ENCODE measurements at regions of chr17 and their contacts with region 1.

Region 1: DNA sequence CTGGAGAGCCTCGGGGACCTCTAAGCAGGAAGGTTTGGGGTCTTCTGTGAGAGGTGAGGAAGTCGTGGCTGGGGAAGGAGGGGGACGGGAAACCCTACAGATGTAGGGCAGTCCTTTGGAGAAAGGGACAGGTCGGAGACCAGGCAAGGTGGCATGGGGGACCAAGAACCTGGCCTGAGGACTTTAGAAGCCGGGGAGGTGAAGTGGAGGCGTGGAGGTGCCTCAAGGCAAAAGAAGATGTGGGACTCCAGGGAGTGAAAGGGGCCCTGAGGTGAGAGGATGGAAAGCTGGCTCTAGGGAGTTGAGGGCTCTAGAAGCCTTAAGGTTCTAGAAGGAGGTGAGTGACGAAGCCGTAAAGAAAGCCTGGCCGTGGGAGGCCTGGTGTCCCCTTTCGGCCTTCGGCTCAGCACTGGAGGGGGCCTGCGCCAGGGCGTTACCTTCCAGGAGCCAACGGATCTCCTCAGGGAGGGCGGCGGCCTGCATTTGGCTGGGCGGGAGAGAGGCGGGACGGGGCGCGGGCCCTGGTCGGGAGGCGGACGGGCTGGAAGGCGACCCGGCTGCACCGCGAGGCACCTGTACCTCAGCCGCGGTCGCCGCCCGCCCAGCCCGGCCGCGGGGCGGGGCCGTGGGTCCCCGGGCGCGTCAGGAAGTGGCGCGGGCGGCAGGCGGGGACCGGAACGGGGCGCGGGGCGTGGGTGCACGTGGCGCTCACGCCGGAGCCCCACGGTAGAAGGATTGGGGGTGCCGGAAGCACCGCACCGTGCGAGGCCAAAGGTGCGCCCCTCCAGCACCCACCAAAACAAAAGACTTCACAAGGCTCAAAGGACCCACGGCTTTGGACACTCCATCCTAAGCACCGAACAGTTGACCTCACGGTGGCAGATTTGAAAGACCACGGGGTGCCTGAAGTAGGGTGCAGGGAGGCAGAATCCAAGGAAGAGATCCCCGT is at the start of gene SKAP1:
- DNase-seq: no peak
- ATAC-seq: peak; percentile 84
- H3K4me3 ChIP-seq: peak within 1 kb of the TSS; percentile 94
- H3K27ac ChIP-seq: peak within 1 kb of the TSS; percentile 74
- H3K4me1 ChIP-seq: peaks cover 8% of the 10 kb centered on the region
- H3K27me3 ChIP-seq: no peaks in the 10 kb centered on the region
- CTCF ChIP-seq: no peak
- EP300 ChIP-seq: no peak
- POLR2A ChIP-seq: peak; percentile 92
- RAD21 ChIP-seq: no peak
- polyA plus RNA-seq, gene SKAP1: 17.1 to 34.2 TPM

Region 2: DNA sequence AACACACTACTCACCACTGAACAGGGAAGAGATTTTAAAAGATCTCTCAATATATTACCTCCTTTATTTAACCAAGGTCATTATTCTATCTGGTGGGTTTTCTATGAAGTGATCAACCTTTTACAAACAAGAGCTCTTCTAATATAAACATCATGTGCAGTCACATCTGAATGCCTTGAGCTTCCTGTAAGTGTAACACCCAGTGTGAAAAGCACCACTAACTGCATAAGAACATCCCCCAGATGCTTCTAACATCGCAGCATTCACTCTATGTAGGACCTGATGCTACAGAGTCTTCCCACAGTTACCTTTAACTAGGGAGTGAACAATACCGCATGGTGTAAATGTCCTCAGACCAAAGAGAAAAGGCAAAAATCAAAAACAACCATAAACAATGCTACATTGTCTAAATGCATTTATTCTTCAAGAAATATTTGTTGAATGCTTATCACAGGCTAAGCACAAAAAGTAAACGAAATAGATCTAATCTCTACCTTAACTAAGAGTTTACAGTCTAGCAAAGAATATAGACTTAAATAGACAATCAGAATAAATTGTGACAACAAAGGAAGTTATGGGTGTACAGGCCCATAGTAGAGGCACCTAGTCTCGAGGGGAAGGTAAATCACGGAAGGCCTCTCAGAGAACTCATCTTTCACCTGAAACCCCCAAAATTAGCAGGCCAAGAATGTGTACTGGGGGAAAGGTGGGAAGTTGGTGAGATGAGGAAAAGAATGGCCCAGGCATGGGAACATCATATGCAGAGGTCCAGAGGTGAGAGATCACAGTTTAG is 16.1 kb before region 1 on chr17:
- CTCF ChIA-PET with region 1: interaction called, 5 read pairs
- POLR2A ChIA-PET with region 1: interaction called, 5 read pairs
- RAD21 ChIA-PET with region 1: interaction called, 13 read pairs
- SMC1A ChIA-PET with region 1: interaction called, 23 read pairs
- in situ Hi-C with region 1: no loop called
- intact Hi-C with region 1: no loop called
- DNase-seq: no peak
- ATAC-seq: peak; percentile 73
- H3K4me3 ChIP-seq: no peak overlapping the region
- H3K27ac ChIP-seq: peak overlapping the region; percentile 33; the same call in 1 of the 2 replicates
- H3K4me1 ChIP-seq: peaks cover 14% of the 10 kb centered on the region
- H3K27me3 ChIP-seq: no peaks in the 10 kb centered on the region
- CTCF ChIP-seq: no peak; a peak in 1 of 6 replicates
- EP300 ChIP-seq: no peak
- POLR2A ChIP-seq: no peak
- RAD21 ChIP-seq: no peak